Posterior cingulate gyrus (tissue), 11 donors: ENCODE measurements at regions of chr11 and their contacts with region 1.

Region 1: GRCh38 chr11:61161190-61162091 is at the start of gene VPS37C:
- DNase-seq: peak; percentile 85 to 99 (median 90)

Region 2: GRCh38 chr11:60841797-60842667 is 319.4 kb before region 1 on chr11 and contains the start of gene CCDC86:
- intact Hi-C with region 1: loop called (anchors 10 kb)
- DNase-seq: peak; percentile 93 to 99 (median 95)

Region 3: GRCh38 chr11:60906132-60906972 is 255.1 kb before region 1 on chr11 and contains the start of gene PRPF19:
- intact Hi-C with region 1: loop called (anchors 5 kb)
- DNase-seq: peak; percentile 93 to 99 (median 98)

Region 4: GRCh38 chr11:61075891-61076290 is 85.5 kb before region 1 on chr11:
- intact Hi-C with region 1: no loop called
- DNase-seq: peak in 1 of 10 donors; percentile 81

Region 5: DNA sequence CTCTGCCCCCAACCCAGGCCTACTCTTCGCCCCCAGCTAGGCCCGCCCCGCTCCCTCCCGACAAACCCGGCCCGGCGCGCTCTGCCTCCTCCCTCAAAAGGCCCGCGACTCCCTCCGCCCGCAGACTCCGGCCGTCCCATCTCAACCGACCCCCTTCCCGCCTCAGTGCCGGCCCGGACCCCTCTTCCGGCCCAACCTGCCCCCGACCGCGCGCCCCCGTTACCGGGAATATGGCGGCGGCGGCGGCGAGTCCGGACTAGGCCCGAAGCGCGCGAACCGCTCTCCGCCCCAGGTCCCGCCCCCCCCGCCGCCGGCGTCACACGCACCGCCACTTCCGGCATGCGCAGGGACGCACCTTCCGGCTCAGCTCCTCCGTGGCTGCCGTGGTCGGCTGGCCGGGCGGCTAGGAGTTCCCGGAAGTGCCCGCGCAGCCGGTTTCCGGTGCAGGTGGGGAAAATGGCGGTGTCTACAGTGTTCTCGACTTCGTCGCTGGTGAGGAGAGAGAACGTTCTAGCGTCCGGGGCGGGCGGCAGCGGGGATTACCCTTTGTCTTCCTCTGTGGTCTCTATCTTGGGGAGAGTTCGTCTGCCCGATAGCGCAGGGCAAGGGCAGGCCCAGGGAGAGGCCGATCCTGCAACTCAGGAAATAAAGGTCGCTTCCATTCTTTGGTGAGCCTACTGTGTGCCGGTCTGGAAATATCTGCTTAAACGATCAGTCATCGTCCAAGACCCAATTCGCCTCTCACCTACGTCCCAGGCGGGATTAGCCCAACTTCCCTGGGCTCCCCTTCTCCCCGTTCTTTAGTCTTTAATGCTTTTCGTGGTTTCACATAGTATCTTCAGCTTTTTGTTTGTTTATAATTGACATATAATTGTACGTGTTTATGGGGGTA is 268.5 kb after region 1 on chr11 and contains the starts of genes CPSF7 and SDHAF2:
- intact Hi-C with region 1: no loop called
- DNase-seq: peak; percentile 96 to 100 (median 98)